Activated CD4-positive, alpha-beta T cell treated with anti-CD3 and anti-CD28 coated beads, Interleukin-2, amount 10 ng/mL, durations not matched to agents 24 days and 14 days (primary cell): ENCODE measurements at regions of chr12 and their contacts with region 1.

Region 1: DNA sequence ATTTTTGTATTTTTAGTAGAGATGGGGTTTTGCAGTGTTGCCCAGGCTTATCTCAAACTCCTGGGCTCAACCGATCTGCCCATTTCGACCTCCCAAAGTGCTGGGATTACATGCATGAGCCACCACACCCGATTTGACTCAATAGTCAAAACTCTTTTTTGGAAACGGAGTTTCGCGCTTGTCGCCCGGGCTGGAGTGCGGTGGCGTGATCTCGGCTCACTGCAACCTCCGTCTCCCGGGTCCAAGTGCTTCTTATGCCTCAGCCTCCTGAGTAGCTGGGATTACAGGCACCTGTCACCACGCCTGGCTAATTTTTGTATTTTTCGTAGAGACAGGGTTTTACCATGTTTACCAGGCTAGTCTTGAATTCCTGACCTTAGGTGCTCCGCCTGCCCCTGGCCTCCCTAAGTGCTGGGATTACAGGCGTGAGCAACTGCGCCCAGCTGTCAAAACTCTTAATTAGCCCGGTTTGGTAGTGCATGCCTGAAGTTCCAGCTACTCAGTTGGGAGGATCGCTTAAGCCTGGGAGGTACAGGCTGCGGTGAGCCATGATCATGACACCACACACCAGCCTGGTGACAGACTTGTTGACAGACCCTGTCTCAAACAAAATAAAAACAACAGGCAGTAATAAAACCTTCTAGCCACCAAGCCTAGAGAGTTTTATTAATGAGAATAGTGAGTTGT is 12.4 kb downstream of the MED21 start:
- DNase-seq: peak; percentile 32
- H3K4me3 Mint-ChIP-seq: no peak overlapping the region
- H3K27ac Mint-ChIP-seq: no peak overlapping the region
- H3K4me1 Mint-ChIP-seq: peaks cover 3% of the 10 kb centered on the region
- H3K27me3 Mint-ChIP-seq: no peaks in the 10 kb centered on the region

Region 2: GRCh38 chr12:26987634-26988424 is 46.9 kb before region 1 on chr12:
- intact Hi-C with region 1: no loop called
- DNase-seq: no peak
- H3K4me3 Mint-ChIP-seq: no peak overlapping the region
- H3K27ac Mint-ChIP-seq: no peak overlapping the region
- H3K4me1 Mint-ChIP-seq: peaks cover 8% of the 10 kb centered on the region
- H3K27me3 Mint-ChIP-seq: no peaks in the 10 kb centered on the region

Region 3: DNA sequence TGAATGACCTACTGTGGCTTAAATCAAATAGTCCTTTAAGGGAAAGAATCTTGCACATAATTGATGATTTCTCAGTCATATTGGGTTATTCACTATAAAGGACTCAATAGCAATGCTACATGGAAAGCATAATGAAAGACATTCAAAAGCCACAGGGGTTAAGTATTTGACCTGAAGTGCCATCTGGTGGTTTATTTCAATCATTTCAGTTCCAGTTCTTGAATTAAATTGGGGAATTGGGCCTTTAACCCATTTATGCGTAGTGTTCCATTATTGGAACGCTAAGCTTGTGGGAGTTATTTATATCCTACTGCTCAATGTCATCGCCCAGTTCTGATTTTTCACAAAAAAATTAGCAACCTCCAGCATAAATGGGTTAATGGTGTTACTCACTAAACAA is 88.9 kb after region 1 on chr12:
- intact Hi-C with region 1: loop called (anchors 5 kb)
- DNase-seq: no peak
- H3K4me3 Mint-ChIP-seq: no peak overlapping the region
- H3K27ac Mint-ChIP-seq: no peak overlapping the region
- H3K4me1 Mint-ChIP-seq: no peaks in the 10 kb centered on the region
- H3K27me3 Mint-ChIP-seq: peaks cover 3% of the 10 kb centered on the region

Region 4: GRCh38 chr12:27142101-27142721 is 107.5 kb after region 1 on chr12:
- intact Hi-C with region 1: loop called (anchors 5 kb)
- DNase-seq: peak; percentile 81
- H3K4me3 Mint-ChIP-seq: no peak overlapping the region
- H3K27ac Mint-ChIP-seq: peak overlapping the region; percentile 1
- H3K4me1 Mint-ChIP-seq: peaks cover 17% of the 10 kb centered on the region
- H3K27me3 Mint-ChIP-seq: peaks cover 2% of the 10 kb centered on the region

Region 5: GRCh38 chr12:27305673-27306456 is 271.1 kb after region 1 on chr12:
- intact Hi-C with region 1: loop called (anchors 1 kb)
- DNase-seq: no peak
- H3K4me3 Mint-ChIP-seq: no peak overlapping the region
- H3K27ac Mint-ChIP-seq: no peak overlapping the region
- H3K4me1 Mint-ChIP-seq: peaks cover 11% of the 10 kb centered on the region
- H3K27me3 Mint-ChIP-seq: no peaks in the 10 kb centered on the region

Region 6: DNA sequence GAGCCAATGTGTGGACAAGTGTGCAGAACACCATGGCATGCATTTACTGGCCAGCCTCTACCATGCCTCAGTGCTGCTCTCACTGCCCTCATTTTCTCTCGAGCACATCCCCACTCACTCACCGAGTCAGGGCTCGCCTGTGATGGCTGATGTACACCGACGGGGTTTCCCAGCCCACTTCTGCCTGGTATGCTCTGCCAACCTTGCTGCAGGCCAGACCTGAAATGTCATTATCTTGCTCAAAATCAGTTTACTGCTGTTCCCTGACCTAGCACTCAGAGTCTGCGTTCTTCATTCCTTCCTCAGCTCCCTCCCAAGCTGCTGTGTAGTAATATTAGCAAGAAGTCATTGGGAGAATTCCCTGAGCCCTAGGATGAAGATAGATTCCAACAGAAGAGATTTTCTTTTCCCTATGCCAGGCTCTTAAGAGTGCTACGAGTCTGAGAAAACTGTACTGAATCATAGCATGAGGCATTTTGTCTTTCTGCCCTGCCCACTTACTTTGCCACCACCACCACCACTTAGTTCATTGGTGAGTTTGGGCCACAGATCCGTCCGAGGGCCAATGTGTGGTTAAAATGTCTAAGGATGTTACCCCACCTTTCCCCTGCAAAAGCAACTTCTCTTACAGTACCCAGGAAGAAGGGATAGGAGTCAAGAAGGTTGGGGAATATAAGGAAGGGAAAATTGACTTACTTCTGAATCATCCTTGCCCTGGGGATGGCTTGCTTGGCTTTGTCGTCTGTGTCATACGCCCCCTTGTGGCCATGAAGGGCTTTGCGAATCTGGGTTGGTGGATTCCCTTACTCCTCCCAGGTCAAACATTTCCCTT is 348.9 kb after region 1 on chr12:
- intact Hi-C with region 1: loop called (anchors 5 kb)
- DNase-seq: peak; percentile 90
- H3K4me3 Mint-ChIP-seq: no peak overlapping the region
- H3K27ac Mint-ChIP-seq: no peak overlapping the region
- H3K4me1 Mint-ChIP-seq: peaks cover 2% of the 10 kb centered on the region
- H3K27me3 Mint-ChIP-seq: no peaks in the 10 kb centered on the region